Pancreas (tissue), 10 donors: ENCODE measurements at regions of chr14 and their contacts with region 1.

Region 1: GRCh38 chr14:67934008-67934481 is 114.5 kb downstream of the RAD51B start:
- DNase-seq: peak in 3 of 6 donors; percentile 18 to 34 (median 23)
- ATAC-seq: peak; percentile 94 to 99 (median 98)
- H3K4me3 ChIP-seq: no peak overlapping the region
- H3K27ac ChIP-seq: no peak overlapping the region
- H3K4me1 ChIP-seq: peaks cover 0 to 6% (median 5%) of the 10 kb centered on the region in 3 donors
- H3K27me3 ChIP-seq: no peaks in the 10 kb centered on the region
- CTCF ChIP-seq: peak; percentile 37 to 62 (median 52)

Region 2: DNA sequence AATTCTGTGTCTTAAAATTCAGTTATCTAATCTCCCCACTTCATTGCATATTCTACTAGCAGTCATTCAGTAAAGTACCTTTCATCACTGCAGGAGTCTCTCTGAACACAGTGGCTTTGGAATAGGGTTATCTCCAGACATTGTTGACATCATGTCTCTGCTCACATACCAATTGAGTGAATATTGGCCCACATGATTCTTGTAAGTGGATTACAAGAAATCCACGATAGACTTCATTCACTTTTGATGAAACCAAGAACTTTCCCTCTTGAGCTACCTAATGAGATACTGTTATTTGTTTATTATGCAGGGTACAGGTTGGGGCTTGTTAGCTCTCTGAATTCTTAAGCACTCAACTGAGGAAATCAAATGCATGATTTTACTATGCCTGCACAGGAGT is 170.5 kb after region 1 on chr14:
- intact Hi-C with region 1: no loop called
- DNase-seq: no peak
- ATAC-seq: peak; percentile 60 to 90 (median 79)
- H3K4me3 ChIP-seq: no peak overlapping the region
- H3K27ac ChIP-seq: peak overlapping the region in 2 of 4 donors; percentile 62 to 66
- H3K4me1 ChIP-seq: peaks cover 1 to 15% (median 2%) of the 10 kb centered on the region in 3 donors
- H3K27me3 ChIP-seq: no peaks in the 10 kb centered on the region
- CTCF ChIP-seq: no peak

Region 3: GRCh38 chr14:68816262-68816942 is 882.4 kb after region 1 on chr14:
- intact Hi-C with region 1: loop called in 2 of 3 experiments (anchors 5 to 10 kb)
- DNase-seq: peak; percentile 89 to 96 (median 92)
- ATAC-seq: peak; percentile 90 to 93 (median 93)
- H3K4me3 ChIP-seq: peak overlapping the region; percentile 3 to 50 (median 34)
- H3K27ac ChIP-seq: peak overlapping the region; percentile 96 to 97 (median 96)
- H3K4me1 ChIP-seq: peaks cover 14 to 27% (median 26%) of the 10 kb centered on the region in 3 donors
- H3K27me3 ChIP-seq: no peaks in the 10 kb centered on the region
- CTCF ChIP-seq: peak; percentile 93 to 98 (median 96)